ENCODE measurements at regions of chr1 and their contacts with region 1.

Region 1: GRCh38 chr1:53871221-53871620 is 18.4 kb downstream of the YIPF1 start:
- DNase-seq: no peak
- H3K4me3 ChIP-seq: no peak overlapping the region
- H3K27ac ChIP-seq: no peak overlapping the region
- H3K4me1 ChIP-seq: no peaks in the 10 kb centered on the region
- H3K27me3 ChIP-seq: no peaks in the 10 kb centered on the region
- CTCF ChIP-seq: no peak

Region 2: GRCh38 chr1:53889304-53890298 is 18.4 kb after region 1 on chr1 and contains the start of gene YIPF1:
- CTCF ChIA-PET with region 1: no interaction called
- POLR2A ChIA-PET with region 1: interaction called, 12 read pairs
- intact Hi-C with region 1: no loop called
- DNase-seq: peak; percentile 80 to 89
- H3K4me3 ChIP-seq: peak within 1 kb of the TSS; percentile 83
- H3K27ac ChIP-seq: peak within 1 kb of the TSS; percentile 81
- H3K4me1 ChIP-seq: peaks cover 25% of the 10 kb centered on the region
- H3K27me3 ChIP-seq: no peaks in the 10 kb centered on the region
- CTCF ChIP-seq: no peak
- total RNA-seq, gene YIPF1: 23.3 and 26.1 TPM in 2 replicates

Measured in PC-9 (cell line).